Ascending aorta (tissue), 2 donors: ENCODE measurements at regions of chr1 and their contacts with region 1.

Region 1: GRCh38 chr1:175877939-175878737 is 134.7 kb upstream of the TNR start:
- DNase-seq: peak; percentile 88 to 96
- H3K4me3 ChIP-seq: peak overlapping the region in 1 of 2 donors; percentile 40
- H3K27ac ChIP-seq: peak overlapping the region; percentile 94 to 96
- H3K4me1 ChIP-seq: peaks cover 10 to 41% of the 10 kb centered on the region in 2 donors
- H3K27me3 ChIP-seq: no peaks in the 10 kb centered on the region
- CTCF ChIP-seq: no peak

Region 2: DNA sequence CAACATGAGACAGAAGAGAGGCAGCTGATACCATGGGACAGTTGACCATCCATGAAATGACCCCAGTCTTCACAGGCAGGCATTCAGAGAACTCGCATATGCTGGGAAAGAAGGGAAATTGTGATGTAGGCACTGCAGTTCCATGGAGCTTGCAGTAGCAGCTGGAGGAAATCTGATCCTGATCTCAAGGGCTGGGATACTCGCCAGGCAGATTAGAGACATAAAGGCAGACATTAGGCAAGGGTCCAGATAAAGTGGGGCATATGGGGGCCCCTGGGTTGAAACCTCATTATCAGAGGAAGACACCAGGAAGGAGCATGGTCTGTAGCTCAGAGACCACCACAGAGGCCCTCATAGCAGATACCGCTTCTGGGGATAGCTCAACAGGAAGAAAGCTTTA is 86.0 kb before region 1 on chr1:
- intact Hi-C with region 1: loop called (anchors 5 kb)
- DNase-seq: no peak
- H3K4me3 ChIP-seq: no peak overlapping the region
- H3K27ac ChIP-seq: peak overlapping the region; percentile 80 to 84
- H3K4me1 ChIP-seq: peaks cover 0 to 32% of the 10 kb centered on the region in 2 donors
- H3K27me3 ChIP-seq: no peaks in the 10 kb centered on the region
- CTCF ChIP-seq: no peak